ENCODE measurements at regions of chr12 and their contacts with region 1.

Region 1: DNA sequence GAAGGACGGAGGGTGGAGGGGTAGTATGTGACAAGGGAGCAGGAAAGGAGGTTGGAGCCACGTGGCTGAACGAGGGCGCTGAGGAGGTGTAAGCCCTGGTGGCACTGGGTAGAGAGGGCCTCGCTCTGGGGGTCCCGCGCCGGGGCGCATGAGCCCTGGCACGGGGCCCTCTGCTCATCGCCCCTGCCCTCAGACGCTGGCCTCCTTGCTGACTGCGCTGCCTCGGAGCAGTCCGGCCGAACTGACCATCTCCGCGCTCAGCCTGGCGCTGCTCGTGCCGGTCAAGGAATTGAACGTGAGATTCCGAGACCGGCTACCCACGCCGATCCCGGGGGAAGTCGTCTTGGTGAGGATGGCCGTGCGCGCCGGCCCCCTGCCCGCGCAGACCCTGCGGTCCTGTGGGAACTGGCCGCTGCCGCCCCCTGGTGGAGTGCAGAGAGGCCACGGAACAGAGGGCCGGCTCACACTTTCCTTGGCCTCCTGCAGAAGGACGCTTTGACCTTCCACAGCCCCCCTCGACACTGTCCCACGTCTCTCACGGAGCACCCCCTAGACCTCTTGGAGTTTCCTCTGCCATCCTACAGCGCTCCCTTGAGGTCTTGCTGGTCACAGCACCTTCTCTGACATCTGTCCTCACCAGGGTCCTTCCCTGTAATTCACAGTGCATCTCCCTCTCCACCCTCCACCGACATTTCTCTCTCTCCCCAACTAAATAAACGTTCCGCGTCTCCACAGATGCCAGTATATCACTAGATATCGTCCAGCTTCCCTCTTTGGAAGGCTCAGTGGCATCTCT is 10.5 kb downstream of the ARHGEF25 start:
- DNase-seq: peak; percentile 81
- ATAC-seq: peak; percentile 77
- H3K4me3 ChIP-seq: peak overlapping the region; percentile 34
- H3K27ac ChIP-seq: no peak overlapping the region
- H3K4me1 ChIP-seq: peaks cover 19% of the 10 kb centered on the region
- H3K27me3 ChIP-seq: peaks cover 86% of the 10 kb centered on the region
- CTCF ChIP-seq: peak; percentile 90

Region 2: DNA sequence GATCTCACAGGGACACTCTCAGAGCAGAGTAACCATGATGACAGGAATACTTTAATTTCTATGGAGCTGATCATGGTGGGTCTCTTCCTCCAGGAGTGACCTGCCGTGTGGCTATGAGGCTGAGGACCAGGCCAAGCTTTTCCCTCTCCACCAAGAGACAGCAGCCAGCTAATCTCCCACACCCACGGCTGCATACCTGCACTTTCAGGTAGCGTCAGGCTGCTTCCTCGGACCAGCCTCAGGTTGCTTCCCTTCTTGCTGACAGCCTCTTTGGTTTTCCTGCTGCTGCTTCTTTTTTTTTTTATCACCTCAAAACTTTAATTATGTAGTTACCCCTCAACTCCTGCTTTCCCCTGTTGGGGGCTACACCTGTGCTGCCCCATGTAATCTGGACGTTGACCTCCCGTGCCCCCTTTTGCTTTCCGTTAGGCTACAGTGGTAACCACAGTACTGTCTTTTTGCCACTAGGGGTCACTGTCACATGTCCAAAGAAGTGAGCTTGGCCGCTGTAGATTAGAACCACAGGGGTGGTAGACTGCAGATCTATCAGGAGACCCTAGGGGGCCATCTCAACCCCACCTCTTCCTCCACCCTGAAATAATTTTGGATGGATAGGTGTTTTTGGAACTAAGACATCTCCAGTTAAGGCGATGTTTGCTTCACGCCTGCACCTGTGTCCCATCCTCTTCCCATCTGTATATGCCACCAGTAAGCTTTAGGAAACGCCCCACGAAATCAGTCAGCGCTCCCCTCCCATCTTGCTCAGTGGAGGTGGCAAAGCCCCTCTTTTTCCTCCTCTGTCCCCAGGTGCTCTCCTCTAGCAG is 38.5 kb before region 1 on chr12:
- intact Hi-C with region 1: loop called (anchors 5 kb)
- DNase-seq: no peak
- ATAC-seq: peak; percentile 97
- H3K4me3 ChIP-seq: no peak overlapping the region
- H3K27ac ChIP-seq: no peak overlapping the region
- H3K4me1 ChIP-seq: no peaks in the 10 kb centered on the region
- H3K27me3 ChIP-seq: no peaks in the 10 kb centered on the region
- CTCF ChIP-seq: peak; percentile 93